GM10248 (cell line): ENCODE measurements at regions of chr4 and their contacts with region 1.

Region 1: GRCh38 chr4:184437565-184438265 is 36.6 kb downstream of the IRF2 start:
- DNase-seq: no peak
- CTCF ChIP-seq: no peak

Region 2: DNA sequence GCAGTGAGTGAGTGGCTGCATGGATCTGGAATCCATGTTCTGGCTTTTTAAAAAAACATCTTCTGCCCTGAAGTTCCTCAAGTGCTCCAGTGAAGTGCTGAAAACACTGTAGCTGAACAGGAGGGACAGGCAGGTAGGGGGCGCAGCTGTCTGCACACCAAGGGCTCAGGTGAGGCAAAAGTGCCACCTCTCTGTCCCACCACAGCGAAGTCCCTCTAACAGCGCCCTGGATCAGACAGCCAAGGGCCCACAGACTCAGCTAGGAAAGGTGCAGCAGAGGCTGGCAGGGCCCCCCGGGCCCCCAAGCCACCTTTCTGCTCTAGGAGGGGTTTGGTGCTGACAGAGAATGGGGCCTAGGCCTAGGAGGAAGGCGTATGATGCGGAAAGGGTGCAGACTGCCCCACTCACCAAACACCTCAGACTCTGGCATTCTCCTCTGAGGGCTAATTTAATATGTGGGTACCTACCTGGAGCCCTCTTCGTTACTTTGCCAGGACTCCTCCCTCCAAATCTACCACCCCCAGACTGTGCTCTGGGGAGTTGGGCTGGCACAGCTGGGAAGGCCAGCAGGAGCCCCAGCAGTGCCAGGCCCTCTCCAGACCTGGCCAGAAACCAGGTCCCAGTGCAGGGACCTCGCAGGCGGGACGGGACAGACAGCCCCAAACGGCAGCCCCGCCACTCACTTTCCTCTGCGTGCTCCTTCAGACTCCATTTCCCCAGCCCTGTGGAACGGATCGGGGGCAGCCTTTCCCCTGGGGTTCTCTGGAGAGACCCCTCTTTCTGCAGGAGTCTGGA is 293.7 kb before region 1 on chr4:
- CTCF ChIA-PET with region 1: no interaction called
- POLR2A ChIA-PET with region 1: no interaction called
- DNase-seq: no peak
- CTCF ChIP-seq: no peak

Region 3: DNA sequence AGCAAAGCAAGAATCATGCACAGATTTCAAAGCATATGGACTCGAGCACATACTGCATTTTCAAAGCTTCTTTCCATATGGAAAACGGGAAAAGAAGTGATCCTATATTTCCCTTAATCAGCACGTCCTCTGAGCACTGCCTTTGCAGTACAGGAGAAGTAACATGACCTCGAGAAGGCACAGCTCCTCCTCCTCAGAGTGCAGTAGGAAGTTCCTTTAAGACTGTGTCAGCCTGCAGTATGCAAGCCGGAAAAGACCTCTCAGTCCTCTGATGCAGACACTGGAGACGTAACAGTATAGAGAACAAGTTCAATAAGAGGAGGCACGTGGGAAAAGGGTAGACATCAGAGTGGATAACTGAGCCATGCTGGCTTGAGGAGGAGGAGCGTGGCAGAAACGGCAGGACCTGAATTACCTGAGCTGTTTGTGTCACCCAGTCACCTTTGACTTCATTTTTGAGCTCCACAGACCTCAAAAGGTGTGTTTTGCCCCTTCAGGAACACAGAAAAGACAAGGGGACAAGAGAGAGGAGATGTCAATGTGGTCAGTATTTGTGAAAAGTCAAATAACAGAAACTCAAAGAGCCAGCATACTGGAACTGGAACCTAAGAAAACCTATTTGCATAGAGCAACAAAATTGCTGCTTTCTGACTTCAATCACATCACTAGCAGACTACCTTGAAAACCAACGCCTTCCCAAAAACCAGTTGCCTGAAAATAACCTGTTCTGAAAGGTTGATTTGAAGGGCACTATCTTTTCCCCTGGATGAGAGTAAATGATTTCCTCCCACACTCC is 15.8 kb after region 1 on chr4:
- CTCF ChIA-PET with region 1: interaction called, 14 read pairs
- POLR2A ChIA-PET with region 1: no interaction called
- DNase-seq: peak; percentile 56
- CTCF ChIP-seq: no peak